ENCODE measurements at regions of chr5 and their contacts with region 1.

Region 1: DNA sequence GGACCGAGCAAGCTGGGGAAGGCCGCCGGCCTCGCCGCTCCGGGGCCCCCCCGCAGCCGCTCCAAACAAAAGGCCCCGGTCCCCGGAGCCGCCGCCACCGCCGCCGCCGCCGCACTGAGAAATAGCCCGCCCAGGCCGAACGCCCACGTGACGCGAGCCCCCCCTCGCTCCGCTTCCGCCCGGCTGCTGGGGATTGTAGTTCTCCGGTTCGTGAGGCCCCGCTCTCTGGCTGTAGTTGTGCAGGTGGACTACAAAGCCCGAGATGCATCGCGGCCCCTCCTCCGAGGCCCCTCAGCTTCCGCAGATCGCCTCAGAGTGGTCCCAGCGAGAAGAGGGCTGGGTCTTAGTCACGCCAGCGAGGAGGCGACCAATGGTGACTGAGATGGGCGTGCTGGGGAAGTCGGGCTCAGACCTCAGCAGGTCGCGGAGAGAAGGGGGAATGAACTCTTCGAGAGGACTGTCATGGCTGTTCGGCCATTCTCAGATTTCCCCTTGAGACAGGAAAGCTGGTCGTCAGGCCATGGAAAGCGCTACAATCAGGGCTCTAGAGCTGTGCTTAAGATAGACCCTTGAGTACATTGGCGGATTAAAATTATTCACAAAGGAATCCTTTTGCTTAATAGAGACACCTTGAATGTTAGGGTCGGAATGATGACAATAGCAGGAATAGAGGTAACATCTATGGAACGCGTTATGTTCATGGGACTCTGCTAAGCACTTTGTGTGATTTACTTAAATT is 489 bp upstream of the PANK3 start:
- DNase-seq: peak; percentile 98
- H3K4me3 Mint-ChIP-seq: peak overlapping the region; percentile 84
- H3K27ac Mint-ChIP-seq: peak overlapping the region; percentile 97
- H3K4me1 Mint-ChIP-seq: peaks cover 31% of the 10 kb centered on the region
- H3K27me3 Mint-ChIP-seq: no peaks in the 10 kb centered on the region

Region 2: DNA sequence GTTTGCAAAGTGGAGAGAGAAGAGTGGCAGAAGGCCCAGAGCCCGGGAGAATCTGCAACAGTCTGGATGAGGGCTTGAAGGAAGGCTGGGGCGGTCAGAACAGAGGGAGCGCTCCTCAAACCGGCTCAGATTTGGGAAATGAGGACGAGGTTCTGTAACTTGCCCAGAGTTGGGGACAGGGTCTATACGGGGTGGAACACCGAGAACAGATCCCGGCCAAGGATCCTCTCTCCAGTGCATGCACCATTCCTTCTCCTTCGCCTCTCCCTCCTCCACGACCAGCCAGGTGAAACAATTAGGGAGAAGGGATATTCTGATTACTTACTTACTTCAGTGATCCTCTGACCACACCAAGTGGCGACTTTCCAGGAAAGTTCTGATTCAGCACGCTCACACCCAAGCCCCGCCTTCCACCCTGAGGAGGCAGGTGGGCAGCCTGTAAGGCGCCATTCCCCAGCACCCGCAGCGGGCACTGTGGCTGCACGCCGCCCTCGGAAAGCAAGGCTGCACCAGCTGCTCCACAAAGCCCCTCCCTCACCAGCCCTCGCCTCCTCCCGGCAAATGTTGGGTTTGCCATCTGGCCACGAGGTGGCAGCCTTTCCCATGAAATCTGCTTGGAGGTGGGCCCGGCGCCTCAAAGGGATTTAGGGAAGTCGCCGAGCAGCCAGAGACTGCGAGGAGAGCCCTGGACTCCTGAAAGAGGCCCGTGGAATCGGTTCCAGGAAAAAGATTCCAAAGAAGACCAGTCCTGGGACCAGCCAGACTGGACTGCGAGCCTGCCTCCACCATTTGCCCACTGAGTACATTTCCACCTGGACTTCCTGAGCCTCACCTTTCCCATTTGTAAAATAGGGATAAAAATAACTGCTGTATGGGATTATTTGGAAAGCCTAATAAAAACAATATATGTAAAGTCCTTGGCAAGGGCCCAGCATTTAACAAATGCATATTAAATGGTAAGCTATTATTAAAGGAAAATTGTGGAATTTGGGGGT is 310.4 kb before region 1 on chr5:
- CTCF ChIA-PET with region 1: no interaction called
- intact Hi-C with region 1: loop called (anchors 1 kb)
- DNase-seq: peak; percentile 84
- H3K4me3 Mint-ChIP-seq: peak overlapping the region; percentile 39
- H3K27ac Mint-ChIP-seq: no peak overlapping the region
- H3K4me1 Mint-ChIP-seq: peaks cover 21% of the 10 kb centered on the region
- H3K27me3 Mint-ChIP-seq: peaks cover 11% of the 10 kb centered on the region

Region 3: DNA sequence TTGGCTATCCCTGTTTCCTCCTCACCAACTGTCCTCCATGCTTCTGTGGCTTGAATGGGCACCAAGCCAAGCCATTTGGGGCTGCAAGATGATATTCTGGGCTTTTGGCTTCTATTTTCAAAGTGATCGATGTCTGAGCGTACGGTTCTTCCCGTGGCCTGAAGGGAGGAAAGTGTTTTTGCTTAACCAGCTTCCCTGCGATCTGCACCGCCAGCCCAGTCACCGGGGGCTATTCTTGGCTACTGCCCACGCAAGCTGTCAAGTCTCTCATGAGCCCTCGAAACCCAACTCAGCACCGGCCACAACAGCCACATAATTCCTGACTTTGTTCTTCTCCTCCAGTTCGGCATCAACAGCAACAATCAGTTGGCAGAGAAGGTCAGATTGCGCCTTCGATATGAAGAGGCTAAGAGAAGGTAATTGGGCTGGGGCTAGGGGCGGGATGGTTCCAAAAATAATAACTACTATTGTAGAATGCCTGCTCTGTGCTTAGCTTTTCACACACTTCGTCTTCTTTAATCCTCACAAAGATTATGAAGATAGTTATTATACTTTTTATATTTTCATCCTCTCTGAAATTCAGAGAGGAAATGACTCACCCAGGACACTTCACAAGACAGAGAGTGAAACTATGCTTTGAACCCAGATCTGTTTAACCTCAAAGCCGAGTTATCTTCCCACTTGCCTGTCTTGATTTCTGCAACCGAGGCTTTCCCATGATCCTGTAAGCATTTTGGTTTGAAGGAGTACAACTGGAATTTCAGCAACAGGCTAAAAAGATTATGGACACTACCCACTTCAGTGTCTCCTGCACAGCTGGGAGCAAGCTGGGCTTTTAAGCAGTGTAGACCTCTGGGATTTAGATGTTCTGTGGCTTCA is 169.8 kb before region 1 on chr5:
- CTCF ChIA-PET with region 1: no interaction called
- intact Hi-C with region 1: loop called (anchors 5 kb)
- DNase-seq: peak; percentile 18
- H3K4me3 Mint-ChIP-seq: no peak overlapping the region
- H3K27ac Mint-ChIP-seq: no peak overlapping the region
- H3K4me1 Mint-ChIP-seq: peaks cover 21% of the 10 kb centered on the region
- H3K27me3 Mint-ChIP-seq: peaks cover 9% of the 10 kb centered on the region

Region 4: DNA sequence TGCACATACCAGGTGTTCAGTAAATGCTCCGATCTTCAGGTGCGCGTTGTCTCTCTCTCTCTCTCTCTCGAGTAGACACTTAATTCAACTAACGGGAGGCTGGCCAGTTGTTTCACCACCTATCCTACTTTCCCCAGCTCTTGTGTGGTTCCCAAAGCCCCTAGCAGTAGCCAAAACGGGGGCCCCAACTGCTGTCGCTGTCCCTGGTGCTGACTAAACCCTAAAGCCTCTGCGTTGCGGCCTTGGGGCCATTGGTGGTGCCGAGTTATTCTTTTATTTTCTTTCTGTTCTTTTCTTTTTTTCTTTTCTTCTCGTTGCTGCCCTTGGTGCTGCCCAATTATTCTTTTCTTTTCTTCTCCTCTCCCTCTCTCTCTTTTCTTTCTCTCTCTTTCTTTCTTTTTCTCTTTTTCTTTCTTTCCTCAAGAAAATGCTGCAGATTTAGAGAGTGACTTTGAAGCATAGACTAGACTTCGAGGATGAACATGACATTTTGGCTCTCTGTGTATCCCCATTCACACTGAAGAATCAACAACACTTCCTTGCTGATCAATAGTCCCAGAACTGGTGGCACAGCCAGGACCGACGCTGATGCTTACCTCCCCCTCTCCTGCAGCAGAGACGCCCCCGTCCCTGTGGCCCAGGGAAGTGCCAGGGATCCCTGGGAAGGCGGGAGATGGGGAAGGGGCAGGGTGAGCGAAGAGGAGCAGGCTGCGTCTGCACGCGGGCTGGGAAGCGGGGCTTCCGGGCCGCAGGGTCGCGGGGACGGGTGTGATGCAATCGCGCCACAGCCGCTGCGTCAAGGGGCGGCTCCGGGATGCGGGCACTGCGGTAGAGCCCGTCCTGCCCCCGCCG is 50.9 kb before region 1 on chr5 and contains the start of gene FBLL1:
- CTCF ChIA-PET with region 1: no interaction called
- intact Hi-C with region 1: loop called (anchors 2 kb)
- DNase-seq: peak; percentile 51
- H3K4me3 Mint-ChIP-seq: peak within 1 kb of the TSS; percentile 67
- H3K27ac Mint-ChIP-seq: no peak within 1 kb of the TSS
- H3K4me1 Mint-ChIP-seq: peaks cover 12% of the 10 kb centered on the region
- H3K27me3 Mint-ChIP-seq: peaks cover 40% of the 10 kb centered on the region
- total RNA-seq, gene FBLL1: 0.21 TPM in 1 of 2 experiments, not detected in the other

Region 5: GRCh38 chr5:168612996-168613395 is 33.3 kb after region 1 on chr5:
- CTCF ChIA-PET with region 1: no interaction called
- intact Hi-C with region 1: loop called (anchors 1 kb)
- DNase-seq: peak; percentile 15
- H3K4me3 Mint-ChIP-seq: peak overlapping the region; percentile 17
- H3K27ac Mint-ChIP-seq: peak overlapping the region; percentile 42
- H3K4me1 Mint-ChIP-seq: peaks cover 16% of the 10 kb centered on the region
- H3K27me3 Mint-ChIP-seq: no peaks in the 10 kb centered on the region

Region 6: DNA sequence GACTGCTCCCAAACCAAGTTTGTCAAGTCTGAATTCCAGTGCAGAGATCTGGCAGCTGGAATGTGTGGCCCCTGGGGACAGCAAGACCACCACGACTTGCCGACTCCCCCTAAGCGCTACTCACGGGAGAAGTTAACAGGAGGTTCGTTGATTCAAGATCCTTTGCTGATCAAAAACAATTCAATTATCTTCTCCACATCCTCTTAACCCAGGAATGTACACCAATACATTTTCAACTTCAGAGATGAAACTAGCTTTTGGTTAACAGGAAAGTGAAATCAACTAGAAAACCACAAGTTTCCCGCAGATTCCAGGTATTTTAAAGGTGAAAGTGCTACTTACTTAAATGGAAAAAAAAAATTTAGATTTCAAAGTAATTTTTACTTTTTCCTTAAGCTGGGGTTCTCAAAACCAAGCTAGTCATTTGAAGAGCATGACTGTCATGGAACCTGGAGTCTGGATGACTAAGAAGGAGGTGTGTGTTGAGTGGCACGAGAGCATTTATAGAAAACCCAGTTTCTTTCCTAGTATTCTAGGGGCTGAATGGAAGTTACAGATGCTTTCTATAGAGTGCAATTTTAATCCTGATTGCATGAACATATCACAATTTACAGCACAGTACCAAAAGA is 257.1 kb after region 1 on chr5:
- CTCF ChIA-PET with region 1: no interaction called
- intact Hi-C with region 1: loop called (anchors 2 kb)
- DNase-seq: peak; percentile 53
- H3K4me3 Mint-ChIP-seq: peak overlapping the region; percentile 46
- H3K27ac Mint-ChIP-seq: peak overlapping the region; percentile 73
- H3K4me1 Mint-ChIP-seq: peaks cover 31% of the 10 kb centered on the region
- H3K27me3 Mint-ChIP-seq: peaks cover 18% of the 10 kb centered on the region

Region 7: GRCh38 chr5:169805527-169805934 is 1225.9 kb after region 1 on chr5:
- CTCF ChIA-PET with region 1: no interaction called
- intact Hi-C with region 1: loop called (anchors 5 kb)
- DNase-seq: peak; percentile 81
- H3K4me3 Mint-ChIP-seq: peak overlapping the region; percentile 1
- H3K27ac Mint-ChIP-seq: peak overlapping the region; percentile 92
- H3K4me1 Mint-ChIP-seq: peaks cover 38% of the 10 kb centered on the region
- H3K27me3 Mint-ChIP-seq: no peaks in the 10 kb centered on the region

Measured in activated naive CD4-positive, alpha-beta T cell treated with anti-CD3 and anti-CD28 coated beads for 36 hours (primary cell).